ENCODE measurements at regions of chr2 and their contacts with region 1.

Region 1: GRCh38 chr2:127324635-127325034 is 30.7 kb upstream of the ERCC3 start:
- DNase-seq: no peak

Region 2: DNA sequence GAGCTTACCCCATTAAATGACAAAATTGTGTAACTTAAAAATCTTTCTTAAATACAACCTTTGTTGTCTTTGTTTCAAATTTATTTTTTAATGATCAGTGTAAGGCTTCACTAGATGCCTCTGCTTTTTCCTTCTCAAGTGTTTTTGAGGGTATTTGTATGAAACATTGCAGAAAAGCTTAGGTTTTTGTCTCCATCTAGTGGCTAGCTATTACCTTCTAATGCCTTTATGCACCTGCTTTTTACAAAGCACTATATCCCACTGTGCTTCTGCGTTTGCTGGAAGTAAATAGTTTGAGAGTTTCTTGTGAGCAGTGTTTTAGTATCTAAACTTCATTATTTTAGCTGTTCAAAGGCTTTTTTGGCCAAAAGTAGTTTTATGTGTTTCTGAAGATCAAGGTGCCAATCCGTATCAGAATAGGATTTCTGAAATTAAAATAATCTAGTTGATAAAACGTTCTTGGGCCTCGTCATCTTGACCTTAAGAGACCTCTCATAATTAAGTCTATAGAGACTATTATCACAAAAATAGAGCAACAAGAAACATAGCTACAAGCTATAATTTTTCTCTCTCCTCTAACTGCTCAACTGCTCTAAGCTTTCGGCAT is 154.7 kb after region 1 on chr2:
- intact Hi-C with region 1: loop called (anchors 5 kb)
- DNase-seq: no peak

Measured in cardiac septum (tissue), 1 donor.